Activated CD4-positive, alpha-beta memory T cell treated with anti-CD3 and anti-CD28 coated beads for 36 hours (primary cell): ENCODE measurements at regions of chr11 and their contacts with region 1.

Region 1: DNA sequence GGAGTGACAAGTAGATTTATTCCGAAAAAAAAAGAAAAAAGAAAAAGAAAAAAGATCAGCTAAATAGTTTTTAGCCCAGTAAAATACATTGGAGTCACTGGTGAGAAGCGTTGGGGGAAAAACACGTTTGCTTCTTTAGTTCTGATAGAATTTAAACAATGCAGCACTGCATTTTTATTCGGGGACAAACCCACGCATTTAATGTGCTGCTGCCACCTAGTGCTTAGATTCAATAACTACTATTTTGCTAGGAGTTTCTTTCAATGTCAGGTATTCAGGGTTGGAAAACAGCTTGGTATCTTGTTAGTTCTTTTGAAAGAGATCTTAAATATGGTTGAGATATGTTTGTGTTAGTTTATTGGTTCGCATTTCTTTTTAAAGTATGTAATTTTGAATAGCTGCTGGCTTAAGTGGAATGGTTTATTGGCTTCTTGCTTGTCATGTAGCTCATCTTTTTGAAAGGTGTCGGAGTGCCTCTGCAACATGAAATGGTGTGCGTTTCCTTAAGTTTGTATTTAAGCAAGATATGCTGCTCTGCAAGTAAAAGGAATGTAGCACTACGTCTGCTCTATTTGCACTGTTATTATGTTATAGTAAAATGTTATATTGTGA is 41.9 kb downstream of the SVIP start:
- DNase-seq: peak; percentile 22
- H3K4me3 Mint-ChIP-seq: no peak overlapping the region
- H3K27ac Mint-ChIP-seq: no peak overlapping the region
- H3K4me1 Mint-ChIP-seq: no peaks in the 10 kb centered on the region
- H3K27me3 Mint-ChIP-seq: no peaks in the 10 kb centered on the region

Region 2: GRCh38 chr11:22244986-22245592 is 542.6 kb before region 1 on chr11:
- CTCF ChIA-PET with region 1: interaction called, 16 read pairs
- POLR2A ChIA-PET with region 1: no interaction called
- intact Hi-C with region 1: loop called (anchors 1 kb)
- DNase-seq: peak; percentile 12
- H3K4me3 Mint-ChIP-seq: no peak overlapping the region
- H3K27ac Mint-ChIP-seq: no peak overlapping the region
- H3K4me1 Mint-ChIP-seq: no peaks in the 10 kb centered on the region
- H3K27me3 Mint-ChIP-seq: peaks cover 5% of the 10 kb centered on the region

Region 3: DNA sequence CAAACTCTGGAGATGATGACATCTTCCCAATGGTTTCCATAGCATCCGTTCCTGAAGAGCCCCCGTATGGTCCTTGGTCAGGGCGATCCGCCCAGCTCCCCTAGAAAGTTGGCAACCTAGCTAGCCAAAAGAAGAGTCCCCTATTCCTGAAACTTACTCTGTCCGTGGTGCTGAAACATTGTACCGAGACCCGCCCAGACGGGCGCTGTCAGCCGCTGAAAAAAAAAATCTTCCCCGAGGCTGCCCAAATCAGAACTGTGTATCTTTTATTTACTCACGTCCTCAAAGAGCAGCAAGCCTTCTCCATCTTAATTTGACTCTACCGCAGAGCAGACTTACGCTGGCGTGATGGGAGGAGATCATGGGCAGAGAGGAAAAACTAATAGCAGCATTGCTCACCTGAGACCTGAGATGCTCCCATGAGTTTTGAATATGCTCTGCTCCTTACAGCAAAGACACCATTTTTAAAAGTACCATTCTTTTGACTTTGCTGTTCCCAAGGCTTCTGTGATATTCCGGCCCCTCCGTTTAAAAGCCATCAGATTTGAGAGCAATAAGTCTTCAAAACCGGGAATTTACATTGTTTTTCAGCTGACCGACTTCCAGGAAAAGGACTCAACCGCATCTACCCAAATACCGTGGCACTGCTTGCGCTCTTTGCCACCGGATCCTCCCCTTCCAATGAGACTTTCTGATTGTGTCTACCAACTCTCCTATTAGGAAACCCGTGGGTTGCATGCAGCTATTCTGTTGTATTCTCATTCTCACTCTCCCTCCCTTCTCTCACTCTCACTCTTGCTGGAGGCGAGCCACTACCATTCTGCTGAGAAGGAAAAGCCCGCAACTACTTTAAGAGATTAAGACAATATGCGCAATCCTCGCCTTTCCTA is 449.8 kb before region 1 on chr11 and contains the start of gene SLC17A6:
- CTCF ChIA-PET with region 1: interaction called, 20 read pairs
- POLR2A ChIA-PET with region 1: no interaction called
- intact Hi-C with region 1: loop called (anchors 1 kb)
- DNase-seq: peak; percentile 18
- H3K4me3 Mint-ChIP-seq: no peak within 1 kb of the TSS
- H3K27ac Mint-ChIP-seq: no peak within 1 kb of the TSS
- H3K4me1 Mint-ChIP-seq: peaks cover 12% of the 10 kb centered on the region
- H3K27me3 Mint-ChIP-seq: peaks cover 54% of the 10 kb centered on the region
- total RNA-seq, gene SLC17A6: not detected

Region 4: DNA sequence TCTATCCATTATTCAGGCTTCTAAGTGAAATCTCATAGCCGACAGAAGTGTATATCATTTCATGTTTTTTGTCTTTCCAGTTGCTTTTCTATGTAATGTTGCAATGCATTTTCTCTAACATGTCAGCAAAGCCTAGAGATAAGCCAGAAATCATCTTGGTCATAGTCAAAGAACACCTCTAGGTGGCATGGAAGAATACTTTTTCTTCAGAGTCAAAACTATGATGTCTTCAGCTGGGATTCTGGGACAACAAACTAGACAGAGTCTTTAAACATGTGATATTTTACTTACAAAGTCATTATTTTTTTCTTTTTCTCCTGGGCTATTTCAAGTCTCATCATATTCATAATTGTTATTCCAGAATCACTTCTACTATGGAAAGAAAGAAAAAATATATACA is 116.8 kb before region 1 on chr11:
- CTCF ChIA-PET with region 1: interaction called, 5 read pairs
- POLR2A ChIA-PET with region 1: no interaction called
- intact Hi-C with region 1: loop called (anchors 5 kb)
- DNase-seq: no peak
- H3K4me3 Mint-ChIP-seq: no peak overlapping the region
- H3K27ac Mint-ChIP-seq: no peak overlapping the region
- H3K4me1 Mint-ChIP-seq: peaks cover 6% of the 10 kb centered on the region
- H3K27me3 Mint-ChIP-seq: peaks cover 44% of the 10 kb centered on the region

Region 5: DNA sequence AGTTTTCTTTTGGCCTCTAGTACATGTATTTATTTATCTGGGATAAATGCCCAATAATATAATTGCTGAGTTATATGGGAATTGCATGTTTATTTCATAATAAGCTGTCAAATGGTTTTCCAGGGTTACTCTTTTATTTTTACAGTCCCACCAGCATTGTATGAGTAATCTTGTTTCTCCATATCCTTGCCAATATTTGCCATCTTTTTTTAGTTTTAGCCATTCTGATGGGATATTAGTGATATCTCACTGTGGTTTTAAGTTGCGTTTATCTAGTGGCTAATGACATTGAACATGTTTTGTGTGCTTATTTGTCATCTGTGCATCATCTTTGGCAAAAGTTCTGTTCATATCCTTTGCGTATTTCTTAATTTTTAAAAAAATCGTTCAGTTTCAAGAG is 445.4 kb after region 1 on chr11:
- CTCF ChIA-PET with region 1: no interaction called
- POLR2A ChIA-PET with region 1: no interaction called
- intact Hi-C with region 1: no loop called
- DNase-seq: no peak
- H3K4me3 Mint-ChIP-seq: no peak overlapping the region
- H3K27ac Mint-ChIP-seq: no peak overlapping the region
- H3K4me1 Mint-ChIP-seq: no peaks in the 10 kb centered on the region
- H3K27me3 Mint-ChIP-seq: no peaks in the 10 kb centered on the region